Cardiac septum (tissue), 1 donor: ENCODE measurements at regions of chr4 and their contacts with region 1.

Region 1: GRCh38 chr4:140153718-140154571 is at the start of gene MAML3:
- DNase-seq: peak; percentile 96
- total RNA-seq, gene MAML3: 4.1 TPM

Region 2: DNA sequence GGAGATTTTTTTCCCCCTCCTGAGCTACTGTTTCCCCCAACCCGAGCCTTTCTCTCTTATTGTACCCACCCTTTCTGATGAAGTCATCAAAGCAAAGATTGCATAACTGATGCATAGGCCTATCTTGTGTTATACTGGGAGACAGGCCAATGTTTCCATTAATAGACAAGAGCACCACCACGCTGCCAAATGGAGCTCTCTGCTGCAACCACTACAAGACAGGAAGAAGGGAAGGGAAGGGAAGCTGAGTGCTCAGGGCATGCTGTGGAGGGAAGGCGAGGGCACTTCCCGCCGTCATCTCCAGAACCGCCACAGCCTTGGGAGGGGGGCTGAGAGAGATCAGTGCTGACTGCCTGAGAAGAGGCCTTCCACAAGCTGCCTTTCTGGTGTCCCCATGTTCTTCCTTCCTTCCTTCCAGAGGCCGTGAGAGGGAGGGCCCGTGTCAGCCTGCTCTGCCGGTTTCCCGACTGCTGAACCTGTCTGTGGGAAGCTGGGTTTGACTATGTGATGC is 413.4 kb before region 1 on chr4:
- intact Hi-C with region 1: loop called (anchors 1 kb)
- DNase-seq: no peak

Region 3: DNA sequence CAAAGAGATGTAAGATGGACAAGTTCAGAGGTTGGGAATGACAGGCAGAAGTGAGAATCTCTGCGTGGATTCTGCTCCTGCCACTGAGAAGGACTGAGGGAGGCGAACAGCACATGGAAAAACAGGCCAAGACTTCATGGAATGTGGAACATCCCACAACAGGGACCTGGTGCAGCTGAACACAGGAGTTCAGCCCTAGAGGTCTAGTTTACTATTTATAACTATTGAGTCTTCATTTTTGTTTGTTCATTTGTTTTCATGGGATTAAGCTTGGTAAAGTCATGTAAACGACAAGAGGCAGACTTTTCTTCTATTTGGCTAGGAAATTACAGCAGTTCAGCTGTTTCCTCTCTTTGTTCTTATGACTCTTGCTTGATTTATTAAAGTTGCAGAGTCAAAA is 234.4 kb before region 1 on chr4:
- intact Hi-C with region 1: loop called (anchors 5 kb)
- DNase-seq: no peak

Region 4: DNA sequence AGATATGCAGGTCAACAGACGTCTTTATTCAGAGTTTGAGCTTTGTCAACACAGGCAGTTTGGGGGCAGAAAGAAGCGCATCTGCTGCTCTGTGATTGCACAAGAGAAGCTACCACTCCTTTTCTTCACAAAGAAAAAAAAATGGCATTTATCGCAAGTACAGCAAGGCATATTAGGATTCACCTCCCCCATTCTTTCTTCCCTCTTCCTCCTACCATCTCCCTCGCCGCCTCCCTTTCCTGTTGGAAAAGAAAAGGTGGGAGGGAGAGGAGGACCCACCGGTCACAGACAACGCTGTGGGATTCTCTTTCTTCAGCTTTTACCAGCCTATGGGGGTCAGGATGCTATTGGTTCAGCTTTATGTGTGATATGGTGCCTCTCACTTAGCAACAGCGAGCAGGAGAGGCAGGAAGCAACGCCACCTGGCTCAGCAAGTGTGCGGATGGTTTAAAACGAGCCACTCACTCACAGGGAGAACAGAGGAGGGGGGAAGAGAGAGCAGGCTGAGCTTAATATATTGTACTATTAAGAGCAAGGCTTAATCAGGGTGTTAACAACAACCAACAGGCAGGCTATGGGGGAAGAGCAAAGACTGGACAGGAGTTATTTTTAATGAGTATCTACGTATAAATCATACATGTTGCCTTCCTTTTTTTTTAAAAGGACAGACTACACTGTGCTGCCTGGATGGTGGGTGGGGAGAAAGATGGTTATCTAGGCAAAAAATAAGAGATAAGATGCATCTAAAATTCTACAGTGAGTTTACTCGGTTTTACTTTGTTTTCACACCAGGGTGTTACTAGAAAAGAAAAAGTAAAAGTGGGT is 104.7 kb before region 1 on chr4:
- intact Hi-C with region 1: loop called (anchors 2 kb)
- DNase-seq: peak; percentile 79

Region 5: GRCh38 chr4:140237606-140237986 is 83.7 kb after region 1 on chr4:
- intact Hi-C with region 1: loop called (anchors 1 kb)
- DNase-seq: peak; percentile 85

Region 6: GRCh38 chr4:140308366-140309123 is 154.6 kb after region 1 on chr4:
- intact Hi-C with region 1: loop called (anchors 5 kb)
- DNase-seq: peak; percentile 83